CD8-positive, alpha-beta T cell (primary cell): ENCODE measurements at regions of chr22 and their contacts with region 1.

Region 1: DNA sequence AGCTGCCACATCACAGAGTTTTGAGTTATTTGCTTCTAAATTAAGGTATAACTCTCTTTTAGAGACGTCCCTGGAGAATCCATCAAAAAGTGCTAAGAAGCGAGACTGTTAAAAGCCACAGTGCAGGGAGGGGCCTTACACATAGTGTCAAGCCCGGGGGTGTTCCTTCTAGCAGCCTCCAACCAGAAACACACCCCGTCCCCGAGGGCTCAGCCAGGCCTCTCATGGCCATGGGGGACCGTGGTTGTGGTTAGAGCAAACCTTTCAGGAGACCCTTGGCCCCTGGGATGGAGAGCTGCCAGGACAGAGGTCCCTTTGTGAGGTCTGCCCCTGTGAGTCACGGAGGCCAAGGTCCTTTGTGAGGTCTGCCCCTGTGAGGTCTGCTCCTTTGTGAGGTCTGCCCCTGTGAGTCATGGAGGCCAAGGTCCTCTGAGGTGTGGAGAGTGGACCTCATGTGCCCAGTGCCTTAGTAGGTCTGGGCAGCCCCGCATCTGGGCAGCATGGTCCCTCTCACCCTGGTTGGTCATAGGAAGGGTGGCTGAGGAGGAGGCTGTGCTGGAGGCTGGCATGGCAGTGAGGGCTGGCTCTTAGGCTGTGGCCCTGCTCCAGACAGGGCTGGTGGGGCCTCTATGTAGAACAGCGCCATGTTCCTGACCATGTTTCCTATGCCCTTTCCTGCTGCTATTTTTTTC is 5.4 kb downstream of the GNAZ start:
- DNase-seq: no peak
- ATAC-seq: no peak
- H3K4me3 ChIP-seq: no peak overlapping the region
- H3K4me3 Mint-ChIP-seq: no peak overlapping the region
- H3K27ac ChIP-seq: no peak overlapping the region
- H3K27ac Mint-ChIP-seq: no peak overlapping the region
- H3K4me1 ChIP-seq: peaks cover 11% of the 10 kb centered on the region
- H3K4me1 Mint-ChIP-seq: peaks cover 8% of the 10 kb centered on the region
- H3K27me3 ChIP-seq: no peaks in the 10 kb centered on the region
- H3K27me3 Mint-ChIP-seq: peaks cover 20% of the 10 kb centered on the region
- CTCF ChIP-seq: no peak

Region 2: DNA sequence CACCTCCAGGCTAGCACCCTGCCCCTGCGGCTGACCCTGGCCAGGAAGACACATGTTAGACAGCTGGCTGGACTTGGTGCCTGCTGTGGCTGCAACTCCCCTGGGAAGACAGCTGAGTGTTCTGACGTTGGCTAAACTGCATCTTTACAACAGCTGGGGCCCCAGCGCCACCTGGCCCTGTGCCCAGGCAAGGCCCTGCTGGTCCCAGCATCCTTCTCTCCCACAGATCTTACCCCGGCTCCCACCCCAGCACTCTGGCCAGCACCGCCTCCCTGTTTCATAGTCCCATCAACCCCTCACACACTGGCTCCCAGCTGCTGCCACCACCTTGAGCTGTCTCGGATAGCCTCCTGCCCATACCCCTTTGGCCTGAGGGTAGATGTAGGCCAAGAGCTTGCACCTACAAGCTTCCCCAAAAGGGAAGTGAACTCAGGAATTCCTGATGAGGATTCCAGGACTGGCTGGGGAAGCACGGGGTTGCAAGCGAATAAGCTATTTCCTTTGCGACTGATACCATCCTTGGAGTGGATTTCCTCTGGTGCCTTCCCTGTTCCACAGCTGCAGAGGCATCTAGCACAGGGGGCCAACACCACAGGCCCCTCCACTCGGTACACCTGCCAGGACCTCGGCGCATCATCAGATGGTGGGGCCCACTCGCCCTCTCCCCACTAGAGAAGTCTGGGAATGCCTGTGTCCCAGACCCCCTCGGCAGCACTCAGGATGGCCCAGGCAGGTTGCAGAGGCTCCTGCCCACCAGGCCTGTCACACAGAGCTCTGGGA is 37.6 kb after region 1 on chr22:
- CTCF ChIA-PET with region 1: no interaction called
- POLR2A ChIA-PET with region 1: no interaction called
- intact Hi-C with region 1: loop called in 1 of 2 experiments (anchors 5 kb)
- DNase-seq: no peak
- ATAC-seq: no peak
- H3K4me3 ChIP-seq: no peak overlapping the region
- H3K4me3 Mint-ChIP-seq: no peak overlapping the region
- H3K27ac ChIP-seq: no peak overlapping the region
- H3K27ac Mint-ChIP-seq: no peak overlapping the region
- H3K4me1 ChIP-seq: no peaks in the 10 kb centered on the region
- H3K4me1 Mint-ChIP-seq: no peaks in the 10 kb centered on the region
- H3K27me3 ChIP-seq: no peaks in the 10 kb centered on the region
- H3K27me3 Mint-ChIP-seq: no peaks in the 10 kb centered on the region
- CTCF ChIP-seq: no peak